Ascending aorta (tissue), 2 donors: ENCODE measurements at regions of chr18 and their contacts with region 1.

Region 1: DNA sequence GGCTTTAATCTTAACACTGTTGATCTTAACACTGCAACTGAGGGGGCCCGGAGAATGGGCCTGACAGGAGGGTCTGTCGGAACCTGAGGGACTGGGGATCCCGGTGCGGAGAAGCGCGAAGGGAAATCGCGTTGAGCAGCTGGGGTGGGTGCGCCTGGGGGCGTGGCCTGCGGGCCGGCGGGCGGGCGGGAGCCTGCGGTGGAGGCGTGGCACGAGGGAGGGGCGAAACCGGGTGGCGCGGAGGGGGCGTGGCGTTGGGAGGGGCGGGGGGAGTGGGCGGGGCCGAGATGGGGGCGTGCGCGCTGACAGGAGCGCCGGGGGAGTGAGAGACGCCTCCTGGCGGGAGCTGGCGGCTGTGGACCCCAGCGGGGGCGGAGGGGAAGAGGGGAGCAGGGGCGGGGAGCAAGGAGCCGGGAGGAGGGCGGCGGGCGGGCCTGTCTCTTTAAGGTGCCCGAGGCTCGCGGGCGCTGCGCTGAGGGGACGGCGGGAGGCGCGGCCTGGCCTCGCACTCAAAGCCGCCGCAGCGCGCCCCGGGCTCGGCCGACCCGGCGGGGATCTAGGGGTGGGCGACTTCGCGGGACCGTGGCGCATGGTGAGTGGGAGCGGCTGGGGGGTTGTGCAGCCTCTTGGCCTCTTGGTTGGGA is at the start of gene TWSG1:
- DNase-seq: peak; percentile 70 to 96
- H3K4me3 ChIP-seq: peak within 1 kb of the TSS; percentile 69 to 86
- H3K27ac ChIP-seq: peak within 1 kb of the TSS; percentile 85 to 95
- H3K4me1 ChIP-seq: peaks cover 0 to 14% of the 10 kb centered on the region in 2 donors
- H3K27me3 ChIP-seq: no peaks in the 10 kb centered on the region
- CTCF ChIP-seq: peak; percentile 16 to 60 (median 59)
- total RNA-seq, gene TWSG1: 25.0 TPM

Region 2: DNA sequence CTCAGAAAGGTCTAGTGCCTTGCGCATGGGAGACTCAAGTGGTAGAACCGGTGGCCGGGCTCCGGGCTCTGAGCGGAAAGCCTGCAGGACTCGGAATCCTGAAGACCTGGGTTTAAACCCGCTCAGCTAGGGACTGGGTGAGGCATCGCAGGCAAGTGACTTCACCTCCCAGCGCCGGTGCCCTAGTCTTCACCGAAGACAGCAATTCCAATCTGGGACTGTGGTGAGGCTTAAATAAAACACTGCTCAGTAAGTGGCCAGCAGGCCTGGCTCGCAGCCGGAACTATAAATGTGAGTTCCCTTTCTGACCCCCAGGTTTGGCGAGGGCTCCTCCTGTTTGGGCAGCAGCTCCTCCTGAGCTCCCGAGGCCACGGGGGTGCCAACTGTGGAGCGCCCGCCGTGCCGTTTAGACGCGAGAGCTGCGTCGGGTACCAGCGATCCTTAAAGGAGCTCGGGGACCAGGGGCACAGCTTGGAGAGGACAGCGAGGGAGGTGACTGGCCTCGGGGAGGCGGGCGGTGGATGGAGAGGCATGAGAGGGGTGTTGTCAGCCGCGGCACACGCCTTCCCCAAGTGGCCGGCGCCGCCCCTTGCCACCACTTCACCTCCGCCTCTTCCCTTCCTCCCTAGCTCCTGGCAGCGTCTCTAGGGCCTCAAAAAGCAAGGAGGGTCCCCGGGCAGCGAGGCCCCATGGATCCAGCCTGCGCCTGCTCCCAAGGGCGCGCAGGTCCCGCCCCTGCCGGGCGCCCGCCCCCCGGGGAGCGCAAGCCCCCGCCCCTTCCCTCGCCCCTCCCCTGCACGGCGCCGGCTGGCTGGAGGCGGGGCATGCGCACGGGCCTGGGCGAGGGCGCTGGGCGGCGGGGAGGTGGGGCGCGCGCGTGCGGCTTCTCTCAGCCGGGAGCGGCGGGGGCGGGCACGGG is 629.8 kb before region 1 on chr18:
- intact Hi-C with region 1: loop called (anchors 2 kb)
- DNase-seq: peak; percentile 39 to 92
- H3K4me3 ChIP-seq: peak overlapping the region; percentile 79 to 97
- H3K27ac ChIP-seq: peak overlapping the region; percentile 89 to 96
- H3K4me1 ChIP-seq: peaks cover 4 to 11% of the 10 kb centered on the region in 2 donors
- H3K27me3 ChIP-seq: no peaks in the 10 kb centered on the region
- CTCF ChIP-seq: peak in 1 of 3 experiments; percentile 4

Region 3: DNA sequence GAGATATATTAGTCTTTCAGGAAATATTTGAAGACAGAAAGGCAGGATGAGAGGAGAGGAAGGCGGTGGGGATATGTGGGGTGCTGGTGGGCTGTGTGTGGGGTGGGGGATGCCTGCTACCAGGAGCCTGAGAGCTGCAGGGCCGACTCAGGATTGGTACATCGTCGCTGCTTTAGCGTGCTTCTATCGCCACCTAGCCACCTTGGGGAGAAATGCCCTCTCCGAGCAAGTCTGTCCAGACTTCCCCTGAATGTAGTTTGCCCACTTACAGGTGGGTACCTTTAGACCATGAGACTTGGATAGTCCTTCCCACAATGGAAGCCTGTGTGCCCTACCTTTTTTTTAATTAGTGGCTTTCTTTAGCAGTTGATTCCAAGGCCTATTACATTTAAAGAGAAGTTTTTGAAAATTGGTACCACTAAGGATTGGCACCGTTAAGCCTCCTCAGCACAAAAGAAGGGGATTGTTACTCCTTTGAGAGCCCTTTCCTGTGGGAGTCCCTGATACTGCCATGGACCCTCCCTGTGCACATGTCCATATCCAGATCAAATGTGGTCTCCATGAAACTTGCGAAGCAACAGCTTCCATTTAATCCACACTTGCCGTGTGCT is 346.1 kb before region 1 on chr18:
- intact Hi-C with region 1: no loop called
- DNase-seq: peak in 1 of 2 donors; percentile 66
- H3K4me3 ChIP-seq: no peak overlapping the region
- H3K27ac ChIP-seq: no peak overlapping the region
- H3K4me1 ChIP-seq: peaks cover 0 to 3% of the 10 kb centered on the region in 2 donors
- H3K27me3 ChIP-seq: no peaks in the 10 kb centered on the region
- CTCF ChIP-seq: peak; percentile 27 to 77 (median 70)

Region 4: GRCh38 chr18:9136315-9137155 is 197.9 kb before region 1 on chr18 and contains the start of gene ANKRD12:
- intact Hi-C with region 1: loop called (anchors 1 kb)
- DNase-seq: peak; percentile 87 to 99
- H3K4me3 ChIP-seq: peak within 1 kb of the TSS; percentile 87 to 93
- H3K27ac ChIP-seq: peak within 1 kb of the TSS; percentile 96 to 99
- H3K4me1 ChIP-seq: peaks cover 4 to 37% of the 10 kb centered on the region in 2 donors
- H3K27me3 ChIP-seq: no peaks in the 10 kb centered on the region
- CTCF ChIP-seq: no peak
- total RNA-seq, gene ANKRD12: 11.4 TPM

Region 5: GRCh38 chr18:9366192-9366591 is 31.7 kb after region 1 on chr18:
- intact Hi-C with region 1: loop called (anchors 2 kb)
- DNase-seq: peak in 1 of 2 donors; percentile 70
- H3K4me3 ChIP-seq: no peak overlapping the region
- H3K27ac ChIP-seq: peak overlapping the region; percentile 32 to 54
- H3K4me1 ChIP-seq: peaks cover 2 to 27% of the 10 kb centered on the region in 2 donors
- H3K27me3 ChIP-seq: no peaks in the 10 kb centered on the region
- CTCF ChIP-seq: peak in 2 of 3 experiments; percentile 34 to 47

Region 6: DNA sequence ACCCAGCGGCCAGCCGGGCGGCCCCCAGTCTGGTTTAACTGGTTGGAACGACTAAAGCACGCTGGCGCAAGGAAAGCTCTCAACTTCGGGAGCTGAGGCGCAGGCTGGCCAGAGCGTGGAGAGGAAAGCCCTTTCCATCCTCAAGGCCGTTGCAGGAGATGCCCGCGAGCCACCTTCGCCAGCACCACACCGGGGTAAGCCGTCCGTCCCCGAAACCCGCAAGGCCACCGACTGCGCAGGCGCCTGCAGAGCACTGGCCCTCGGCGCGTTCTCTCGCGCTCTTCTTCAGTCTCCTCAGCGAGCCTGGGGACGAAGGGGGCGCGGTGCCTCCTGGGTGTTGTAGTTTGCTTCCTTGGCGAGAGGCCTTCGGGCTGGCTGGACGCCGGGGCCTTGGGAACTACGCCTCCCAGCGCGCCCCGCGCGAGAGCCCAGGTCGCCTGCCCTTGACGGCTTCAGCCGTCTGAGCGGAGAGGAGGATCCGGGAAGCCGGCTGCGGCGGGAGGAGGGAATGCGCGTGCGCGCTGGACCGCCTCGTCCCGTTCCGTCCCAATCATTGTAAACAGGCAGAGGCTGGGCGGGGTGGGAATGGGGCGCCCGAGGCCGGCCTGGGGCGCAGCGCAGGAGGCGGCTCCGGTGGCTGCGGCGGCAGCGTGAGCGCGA is 140.7 kb after region 1 on chr18 and contains the start of gene RALBP1:
- intact Hi-C with region 1: loop called (anchors 1 kb)
- DNase-seq: peak; percentile 97 to 100
- H3K4me3 ChIP-seq: peak within 1 kb of the TSS; percentile 95 to 98
- H3K27ac ChIP-seq: peak within 1 kb of the TSS; percentile 88 to 90
- H3K4me1 ChIP-seq: peaks cover 0 to 5% of the 10 kb centered on the region in 2 donors
- H3K27me3 ChIP-seq: no peaks in the 10 kb centered on the region
- CTCF ChIP-seq: peak in 1 of 3 experiments; percentile 35
- total RNA-seq, gene RALBP1: 67.2 TPM

Region 7: DNA sequence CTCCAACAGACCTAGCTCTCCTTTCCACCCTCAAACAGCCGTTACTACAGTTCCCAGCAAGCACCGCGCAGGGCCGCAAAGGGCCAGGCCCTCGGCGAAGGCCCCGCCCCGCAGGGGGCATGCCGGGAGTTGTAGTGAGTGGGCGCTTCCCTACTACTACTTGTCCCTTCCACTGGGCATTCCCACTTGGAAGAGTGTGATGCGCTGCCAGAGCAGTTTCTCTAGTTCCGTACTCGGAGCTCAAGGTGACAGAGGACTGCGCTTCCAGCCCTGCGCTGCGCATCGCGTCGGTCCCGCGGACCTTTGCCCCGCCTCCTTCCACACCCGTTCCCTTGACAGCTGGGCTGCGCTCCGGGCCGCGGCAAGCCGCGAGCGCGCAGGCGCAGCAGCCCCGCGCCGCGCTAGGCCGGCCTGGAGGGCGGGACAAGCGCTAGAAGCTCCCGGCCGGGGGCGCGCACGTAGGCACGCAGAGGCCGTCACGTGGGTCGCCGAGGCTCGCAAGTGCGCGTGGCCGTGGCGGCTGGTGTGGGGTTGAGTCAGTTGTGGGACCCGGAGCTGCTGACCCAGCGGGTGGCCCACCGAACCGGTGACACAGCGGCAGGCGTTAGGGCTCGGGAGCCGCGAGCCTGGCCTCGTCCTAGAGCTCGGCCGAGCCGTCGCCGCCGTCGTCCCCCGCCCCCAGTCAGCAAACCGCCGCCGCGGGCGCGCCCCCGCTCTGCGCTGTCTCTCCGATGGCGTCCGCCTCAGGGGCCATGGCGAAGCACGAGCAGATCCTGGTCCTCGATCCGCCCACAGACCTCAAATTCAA is 579.3 kb after region 1 on chr18 and contains the start of gene VAPA:
- intact Hi-C with region 1: loop called (anchors 10 kb)
- DNase-seq: peak; percentile 85 to 97
- H3K4me3 ChIP-seq: peak within 1 kb of the TSS; percentile 96 to 97
- H3K27ac ChIP-seq: peak within 1 kb of the TSS; percentile 99 to 100
- H3K4me1 ChIP-seq: peaks cover 3 to 21% of the 10 kb centered on the region in 2 donors
- H3K27me3 ChIP-seq: no peaks in the 10 kb centered on the region
- CTCF ChIP-seq: no peak
- total RNA-seq, gene VAPA: 109 TPM